ENCODE measurements at regions of chr18 and their contacts with region 1.

Region 1: DNA sequence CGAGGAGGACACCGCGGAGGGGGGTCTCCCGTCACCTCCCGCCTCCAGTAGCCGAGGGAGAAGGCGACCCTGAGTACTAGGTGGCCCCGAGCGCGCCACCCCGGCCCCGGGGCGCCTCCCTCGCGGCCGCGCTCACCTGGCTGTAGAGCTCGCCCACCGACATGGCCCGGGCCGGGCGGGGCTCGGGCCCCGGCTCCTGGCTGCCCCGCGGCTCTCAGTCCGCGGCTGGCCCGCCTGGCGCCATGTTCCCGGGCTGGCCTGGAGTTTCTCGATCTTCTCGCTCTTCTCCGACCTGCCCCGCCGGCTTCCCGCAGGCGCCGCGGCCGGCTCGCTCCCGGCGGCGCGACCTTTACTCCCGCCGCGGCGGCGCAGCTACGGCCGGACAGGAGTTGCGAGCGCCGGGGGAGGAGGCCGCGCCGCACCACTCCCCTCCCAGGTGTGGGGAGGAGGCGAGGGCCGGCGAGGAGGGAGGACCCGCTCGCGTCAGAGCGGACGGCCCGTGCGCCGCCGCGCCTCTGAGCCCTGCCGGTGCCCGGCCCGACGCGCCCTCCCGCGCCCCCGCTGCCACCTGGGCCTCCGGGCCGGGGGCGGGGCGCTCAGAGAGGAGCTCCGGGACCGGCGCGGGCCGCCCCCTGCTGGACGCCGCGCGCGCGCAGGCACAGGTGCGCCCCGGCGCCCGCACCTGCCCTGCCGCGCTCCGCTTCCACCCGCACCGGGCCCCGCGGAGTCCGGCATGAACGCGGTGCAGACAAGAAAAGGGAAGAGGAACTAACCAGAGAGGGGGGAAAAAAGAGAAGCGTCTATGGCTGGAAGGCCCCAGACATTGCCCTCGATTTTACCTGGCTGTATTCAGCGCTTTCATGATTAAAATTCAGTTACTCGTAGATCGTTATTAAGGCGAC is at the start of gene MYO5B:
- DNase-seq: no peak
- H3K4me3 ChIP-seq: peak within 1 kb of the TSS; percentile 63 to 72
- H3K27ac ChIP-seq: no peak within 1 kb of the TSS
- H3K4me1 ChIP-seq: peaks cover 0 to 3% of the 10 kb centered on the region in 2 donors
- H3K27me3 ChIP-seq: no peaks in the 10 kb centered on the region
- CTCF ChIP-seq: peak in 2 of 3 experiments; percentile 32 to 82
- total RNA-seq, gene MYO5B: 0.21 TPM

Region 2: DNA sequence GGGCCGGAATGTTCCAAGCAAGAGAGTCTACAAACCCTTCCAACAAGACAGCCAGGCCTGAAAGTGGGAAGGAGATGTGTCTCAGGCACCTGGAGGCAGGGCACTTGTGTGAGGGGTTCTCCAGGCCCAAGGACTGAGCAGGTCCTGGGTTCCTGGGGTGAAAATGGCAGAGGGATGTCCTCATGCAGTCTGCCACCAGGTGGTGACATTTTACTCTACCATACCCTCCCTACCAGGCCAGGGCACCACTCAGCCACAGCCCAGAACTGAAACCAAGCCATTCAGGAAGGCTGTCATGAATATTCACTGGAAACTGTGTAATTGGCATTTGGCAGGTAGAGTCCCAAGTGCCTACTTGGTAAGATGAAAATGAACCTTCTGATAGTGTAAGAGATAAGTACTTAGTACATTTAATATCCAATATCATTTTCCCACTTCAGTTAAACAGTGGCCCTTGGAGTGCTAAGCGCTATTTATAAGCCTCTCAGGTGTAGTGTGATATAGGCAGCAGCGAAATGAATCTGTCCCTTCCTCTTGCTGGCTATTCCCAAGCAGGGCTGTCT is 185.0 kb before region 1 on chr18:
- intact Hi-C with region 1: loop called (anchors 5 kb)
- DNase-seq: no peak
- H3K4me3 ChIP-seq: no peak overlapping the region
- H3K27ac ChIP-seq: no peak overlapping the region
- H3K4me1 ChIP-seq: peaks cover 0 to 14% of the 10 kb centered on the region in 2 donors
- H3K27me3 ChIP-seq: no peaks in the 10 kb centered on the region
- CTCF ChIP-seq: peak; percentile 11 to 45 (median 14)

Region 3: DNA sequence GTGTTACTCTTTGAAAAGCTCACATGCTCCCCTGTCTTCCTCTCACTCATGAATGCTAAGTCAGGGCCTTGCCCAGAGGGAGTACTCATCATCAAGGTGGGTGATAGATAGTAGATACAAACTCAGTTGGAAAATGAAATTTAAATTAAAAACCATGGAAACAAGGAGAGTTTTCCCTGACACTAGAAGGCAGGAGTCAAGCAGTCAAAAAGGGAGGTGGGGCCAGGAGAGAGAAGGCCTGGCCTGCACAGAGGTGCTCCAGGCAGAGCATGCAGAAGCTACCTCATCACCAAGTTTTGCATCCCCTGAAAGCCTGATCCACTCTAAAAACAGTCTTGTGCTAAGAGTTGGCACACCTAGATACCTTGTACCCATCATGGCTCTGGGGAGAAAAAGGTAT is 143.6 kb before region 1 on chr18:
- intact Hi-C with region 1: loop called (anchors 2 kb)
- DNase-seq: no peak
- H3K4me3 ChIP-seq: no peak overlapping the region
- H3K27ac ChIP-seq: no peak overlapping the region
- H3K4me1 ChIP-seq: no peaks in the 10 kb centered on the region
- H3K27me3 ChIP-seq: no peaks in the 10 kb centered on the region
- CTCF ChIP-seq: peak in 1 of 3 experiments; percentile 45